HepG2 (cell line): ENCODE measurements at regions of chrX and their contacts with region 1.

Region 1: DNA sequence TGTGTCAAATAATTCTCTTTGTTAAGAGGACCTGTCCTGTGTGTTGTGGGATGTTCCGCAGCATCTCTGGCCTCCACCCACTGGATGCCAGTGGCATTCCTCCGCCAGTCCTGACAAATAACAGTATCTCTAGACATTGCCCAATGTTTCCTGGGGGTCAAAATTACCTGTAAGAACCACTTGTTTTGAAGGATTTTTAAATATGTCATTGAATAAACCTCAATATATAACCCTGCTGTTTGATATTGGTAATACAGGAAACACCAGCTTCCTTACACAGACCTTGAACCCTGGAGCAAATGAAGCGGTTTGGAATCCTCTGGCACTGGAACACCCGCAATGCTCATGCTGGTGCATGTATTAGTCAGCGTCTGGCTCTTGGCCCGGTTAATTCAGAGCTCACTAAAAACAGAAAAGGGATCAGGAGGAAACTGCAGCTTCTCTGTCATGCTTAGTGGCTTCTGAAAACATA is 101.3 kb downstream of the TBL1X start:
- DNase-seq: peak; percentile 65
- ATAC-seq: peak; percentile 91
- H3K4me3 ChIP-seq: no peak overlapping the region
- H3K27ac ChIP-seq: peak overlapping the region; percentile 43
- H3K4me1 ChIP-seq: peaks cover 29% of the 10 kb centered on the region
- H3K27me3 ChIP-seq: no peaks in the 10 kb centered on the region
- CTCF ChIP-seq: no peak
- EP300 ChIP-seq: no peak
- POLR2A ChIP-seq: no peak
- RAD21 ChIP-seq: no peak

Region 2: GRCh38 chrX:9439004-9439403 is 127.2 kb before region 1 on chrX:
- CTCF ChIA-PET with region 1: no interaction called
- POLR2A ChIA-PET with region 1: no interaction called
- in situ Hi-C with region 1: no loop called
- intact Hi-C with region 1: no loop called
- DNase-seq: no peak
- ATAC-seq: no peak
- H3K4me3 ChIP-seq: no peak overlapping the region
- H3K27ac ChIP-seq: no peak overlapping the region
- H3K4me1 ChIP-seq: no peaks in the 10 kb centered on the region
- H3K27me3 ChIP-seq: no peaks in the 10 kb centered on the region
- CTCF ChIP-seq: no peak
- EP300 ChIP-seq: no peak
- POLR2A ChIP-seq: no peak
- RAD21 ChIP-seq: no peak

Region 3: GRCh38 chrX:9586992-9587392 is 20.8 kb after region 1 on chrX:
- CTCF ChIA-PET with region 1: no interaction called
- POLR2A ChIA-PET with region 1: no interaction called
- in situ Hi-C with region 1: no loop called
- intact Hi-C with region 1: loop called (anchors 1 kb)
- DNase-seq: no peak
- ATAC-seq: no peak
- H3K4me3 ChIP-seq: no peak overlapping the region
- H3K27ac ChIP-seq: no peak overlapping the region
- H3K4me1 ChIP-seq: no peaks in the 10 kb centered on the region
- H3K27me3 ChIP-seq: no peaks in the 10 kb centered on the region
- CTCF ChIP-seq: no peak
- EP300 ChIP-seq: no peak
- POLR2A ChIP-seq: no peak
- RAD21 ChIP-seq: no peak